Uterus (tissue), 4 donors: ENCODE measurements at regions of chr1 and their contacts with region 1.

Region 1: GRCh38 chr1:117534995-117535467 is 70.8 kb upstream of the TENT5C start:
- DNase-seq: peak in 1 of 2 donors; percentile 20
- H3K4me3 ChIP-seq: no peak overlapping the region
- H3K27ac ChIP-seq: no peak overlapping the region
- H3K4me1 ChIP-seq: no peaks in the 10 kb centered on the region
- H3K27me3 ChIP-seq: no peaks in the 10 kb centered on the region
- CTCF ChIP-seq: peak; percentile 32 to 72 (median 51)
- POLR2A ChIP-seq: no peak

Region 2: DNA sequence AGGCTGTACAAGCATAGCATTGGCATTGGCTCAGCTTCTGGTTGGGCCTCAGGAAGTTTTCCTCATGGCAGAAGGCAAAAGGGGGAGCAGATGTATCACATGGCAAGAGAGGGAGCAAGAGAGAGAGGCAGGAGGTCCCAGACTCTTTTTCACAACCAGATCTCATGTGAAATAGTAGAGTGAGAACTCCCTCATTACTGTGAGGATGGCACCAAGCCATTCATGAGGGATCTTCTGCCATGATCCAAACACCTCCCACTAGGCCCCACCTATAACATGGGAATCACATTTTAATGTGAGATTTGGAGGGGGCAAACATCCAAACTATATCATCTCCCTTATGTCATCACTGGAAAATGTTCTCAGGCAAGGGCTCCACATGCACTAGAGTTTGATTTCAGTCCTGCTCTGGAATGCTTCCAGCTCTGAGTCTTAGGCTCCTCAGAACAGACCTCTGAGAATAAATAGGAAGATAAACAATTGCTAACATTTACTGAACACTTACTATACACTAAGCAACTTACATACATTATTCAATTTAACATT is 284.9 kb before region 1 on chr1:
- intact Hi-C with region 1: no loop called
- DNase-seq: no peak
- H3K4me3 ChIP-seq: no peak overlapping the region
- H3K27ac ChIP-seq: no peak overlapping the region
- H3K4me1 ChIP-seq: no peaks in the 10 kb centered on the region
- H3K27me3 ChIP-seq: no peaks in the 10 kb centered on the region
- CTCF ChIP-seq: no peak
- POLR2A ChIP-seq: no peak

Region 3: GRCh38 chr1:117758444-117759316 is 223.6 kb after region 1 on chr1:
- intact Hi-C with region 1: loop called (anchors 10 kb)
- DNase-seq: peak; percentile 77 to 78
- H3K4me3 ChIP-seq: peak overlapping the region; percentile 13 to 32
- H3K27ac ChIP-seq: no peak overlapping the region
- H3K4me1 ChIP-seq: no peaks in the 10 kb centered on the region
- H3K27me3 ChIP-seq: no peaks in the 10 kb centered on the region
- CTCF ChIP-seq: peak; percentile 77 to 92 (median 82)
- POLR2A ChIP-seq: no peak